Calu3 (cell line): ENCODE measurements at regions of chr1 and their contacts with region 1.

Region 1: GRCh38 chr1:160428655-160429054 is 28.3 kb downstream of the VANGL2 start:
- DNase-seq: peak; percentile 78
- H3K4me3 Mint-ChIP-seq: no peak overlapping the region
- H3K27ac Mint-ChIP-seq: no peak overlapping the region
- H3K4me1 Mint-ChIP-seq: no peaks in the 10 kb centered on the region
- H3K27me3 Mint-ChIP-seq: peaks cover 29% of the 10 kb centered on the region
- CTCF ChIP-seq: peak; percentile 78

Region 2: GRCh38 chr1:160342953-160343869 is 85.4 kb before region 1 on chr1 and contains the starts of genes COPA and NCSTN:
- CTCF ChIA-PET with region 1: no interaction called
- intact Hi-C with region 1: no loop called
- DNase-seq: peak; percentile 94
- H3K4me3 Mint-ChIP-seq: peak within 1 kb of the TSS; percentile 87
- H3K27ac Mint-ChIP-seq: peak within 1 kb of the TSS; percentile 96
- H3K4me1 Mint-ChIP-seq: peaks cover 15% of the 10 kb centered on the region
- H3K27me3 Mint-ChIP-seq: no peaks in the 10 kb centered on the region
- CTCF ChIP-seq: no peak
- total RNA-seq, gene COPA: 195 and 208 TPM in 2 replicates
- total RNA-seq, gene NCSTN: 128 and 135 TPM in 2 replicates

Region 3: DNA sequence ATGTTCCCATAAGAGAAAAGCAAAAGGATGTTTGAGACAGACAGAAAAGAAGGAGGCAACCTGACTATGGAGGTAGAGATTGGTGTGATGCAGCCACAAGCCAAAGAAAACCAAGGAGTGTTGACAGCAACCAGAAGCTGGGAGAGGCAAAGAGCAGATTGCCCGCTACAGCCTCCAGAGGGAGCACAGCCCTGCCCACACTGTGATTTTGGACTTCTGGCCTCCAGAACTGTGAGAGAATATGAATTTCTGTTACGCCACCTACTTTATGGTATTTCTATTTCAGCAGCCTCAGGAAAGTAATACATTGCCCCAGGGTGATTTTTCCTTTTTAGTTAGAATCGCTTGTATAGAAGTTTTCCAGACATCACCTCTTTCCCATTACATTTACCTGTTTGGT is 66.0 kb after region 1 on chr1:
- CTCF ChIA-PET with region 1: interaction called, 3 read pairs
- intact Hi-C with region 1: loop called (anchors 1 kb)
- DNase-seq: peak; percentile 52
- H3K4me3 Mint-ChIP-seq: no peak overlapping the region
- H3K27ac Mint-ChIP-seq: no peak overlapping the region
- H3K4me1 Mint-ChIP-seq: no peaks in the 10 kb centered on the region
- H3K27me3 Mint-ChIP-seq: no peaks in the 10 kb centered on the region
- CTCF ChIP-seq: peak; percentile 56

Region 4: GRCh38 chr1:160539990-160540858 is 111.6 kb after region 1 on chr1:
- CTCF ChIA-PET with region 1: no interaction called
- intact Hi-C with region 1: loop called (anchors 5 kb)
- DNase-seq: no peak
- H3K4me3 Mint-ChIP-seq: no peak overlapping the region
- H3K27ac Mint-ChIP-seq: peak overlapping the region; percentile 15
- H3K4me1 Mint-ChIP-seq: peaks cover 50% of the 10 kb centered on the region
- H3K27me3 Mint-ChIP-seq: no peaks in the 10 kb centered on the region
- CTCF ChIP-seq: no peak

Region 5: GRCh38 chr1:160607011-160607671 is 178.5 kb after region 1 on chr1:
- CTCF ChIA-PET with region 1: interaction called, 23 read pairs
- intact Hi-C with region 1: loop called (anchors 1 kb)
- DNase-seq: peak; percentile 67
- H3K4me3 Mint-ChIP-seq: no peak overlapping the region
- H3K27ac Mint-ChIP-seq: no peak overlapping the region
- H3K4me1 Mint-ChIP-seq: no peaks in the 10 kb centered on the region
- H3K27me3 Mint-ChIP-seq: peaks cover 74% of the 10 kb centered on the region
- CTCF ChIP-seq: peak; percentile 73

Region 6: DNA sequence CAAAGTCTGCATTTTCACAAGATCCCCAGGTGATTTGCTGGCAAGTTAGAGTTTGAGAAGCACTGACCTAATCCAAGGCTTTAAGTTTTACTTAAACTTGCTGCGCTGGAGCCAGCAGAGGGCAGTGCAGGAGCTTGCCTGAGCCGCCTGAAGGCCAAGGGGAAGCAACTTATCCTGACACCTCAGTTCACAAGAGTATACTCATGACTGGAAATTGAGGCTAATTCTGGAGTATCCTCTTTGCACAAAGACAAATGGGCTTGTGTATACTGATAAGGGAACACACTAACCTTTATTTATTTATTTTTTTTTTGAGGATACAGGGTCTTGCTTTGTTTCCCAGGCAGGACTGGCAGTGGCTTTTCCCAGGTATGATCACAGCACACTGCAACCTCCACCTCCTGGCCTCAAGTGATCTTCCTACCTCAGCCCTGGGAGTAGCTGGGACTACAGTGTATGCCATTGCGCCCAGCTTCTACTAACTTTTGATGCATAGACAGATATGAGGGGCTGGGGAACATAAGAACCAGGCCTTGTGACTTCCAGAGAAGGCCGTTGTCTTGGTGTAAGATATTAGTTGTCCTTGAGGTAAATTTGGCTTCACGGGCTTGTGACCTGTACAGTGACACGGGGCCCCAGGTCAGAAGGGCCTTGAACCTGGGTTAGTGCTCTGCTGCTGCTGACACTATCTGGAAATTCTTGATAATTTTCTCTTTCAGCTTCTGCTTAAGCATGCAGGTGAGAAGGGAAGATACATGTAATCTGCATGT is 247.2 kb after region 1 on chr1:
- CTCF ChIA-PET with region 1: no interaction called
- intact Hi-C with region 1: loop called (anchors 5 kb)
- DNase-seq: peak; percentile 73
- H3K4me3 Mint-ChIP-seq: no peak overlapping the region
- H3K27ac Mint-ChIP-seq: no peak overlapping the region
- H3K4me1 Mint-ChIP-seq: no peaks in the 10 kb centered on the region
- H3K27me3 Mint-ChIP-seq: peaks cover 46% of the 10 kb centered on the region
- CTCF ChIP-seq: peak; percentile 58